Cardiac septum (tissue), 1 donor: ENCODE measurements at regions of chr6 and their contacts with region 1.

Region 1: GRCh38 chr6:154410619-154411072 is 54.0 kb upstream of the IPCEF1 start:
- DNase-seq: no peak

Region 2: GRCh38 chr6:153858529-153858928 is 552.1 kb before region 1 on chr6:
- intact Hi-C with region 1: no loop called
- DNase-seq: no peak

Region 3: GRCh38 chr6:154432533-154433476 is 22.2 kb after region 1 on chr6:
- intact Hi-C with region 1: loop called (anchors 2 kb)
- DNase-seq: no peak

Region 4: DNA sequence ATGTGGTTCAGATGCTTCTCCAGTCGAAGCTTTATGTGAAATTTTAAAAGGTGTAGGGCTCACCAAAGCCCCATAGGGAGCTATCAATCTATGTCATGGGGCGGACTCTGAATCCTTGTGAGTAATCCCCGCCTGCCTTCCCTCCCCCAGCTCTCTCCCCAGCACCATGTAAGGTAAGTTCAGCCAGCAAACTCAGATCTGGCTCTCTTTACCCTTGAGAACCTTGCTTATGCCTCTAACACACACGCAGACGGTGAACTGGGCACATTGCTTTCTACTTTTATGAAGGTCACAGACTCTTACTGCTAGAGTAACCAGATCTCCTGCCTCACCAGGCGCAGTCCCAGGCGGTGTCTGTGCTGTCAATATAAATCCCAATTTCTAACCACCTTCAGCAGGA is 182.5 kb after region 1 on chr6:
- intact Hi-C with region 1: loop called (anchors 10 kb)
- DNase-seq: no peak